ENCODE measurements at regions of chr15 and their contacts with region 1.

Region 1: DNA sequence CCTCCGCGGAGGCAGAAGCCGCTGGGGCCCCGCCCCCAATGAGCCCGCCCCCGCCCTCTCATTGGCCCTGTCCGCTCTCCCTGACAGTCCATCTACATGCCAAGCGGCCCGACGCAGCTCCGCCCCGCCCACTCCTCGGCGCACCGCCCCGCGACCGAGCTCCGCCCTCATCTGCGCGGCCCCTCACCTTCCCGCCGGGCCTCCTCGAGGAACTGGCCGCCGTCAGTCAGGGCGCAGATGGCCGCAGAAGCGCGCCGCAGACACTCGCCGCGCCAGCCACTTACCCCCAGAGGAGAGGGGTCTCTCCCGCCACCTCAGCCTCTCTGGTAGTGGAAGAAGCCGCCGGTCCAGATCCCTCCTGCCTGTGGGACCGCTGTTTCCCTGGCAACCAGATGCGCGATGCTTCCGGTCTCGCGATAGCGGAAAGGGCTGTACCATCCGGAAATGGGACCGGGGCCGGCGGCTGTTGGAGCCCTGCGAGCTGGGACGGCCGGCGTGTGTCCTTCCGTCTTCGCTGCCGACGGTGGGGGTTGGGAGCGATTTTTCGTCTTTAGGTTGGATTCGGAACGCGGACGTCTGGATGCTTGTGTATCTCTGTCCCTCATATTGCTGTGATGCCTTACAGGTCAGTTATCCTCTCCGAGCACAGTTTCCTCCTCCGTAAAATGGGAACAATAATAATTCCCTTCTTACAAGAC is at the start of gene FSIP1:
- DNase-seq: peak; percentile 91
- H3K4me3 Mint-ChIP-seq: peak within 1 kb of the TSS; percentile 83
- H3K27ac Mint-ChIP-seq: peak within 1 kb of the TSS; percentile 24
- H3K4me1 Mint-ChIP-seq: peaks cover 11% of the 10 kb centered on the region
- H3K27me3 Mint-ChIP-seq: no peaks in the 10 kb centered on the region
- CTCF ChIP-seq: no peak
- total RNA-seq, gene FSIP1: 0.27 and 0.28 TPM in 2 replicates

Region 2: GRCh38 chr15:39807791-39808190 is 25.2 kb after region 1 on chr15:
- CTCF ChIA-PET with region 1: no interaction called
- intact Hi-C with region 1: no loop called
- DNase-seq: no peak
- H3K4me3 Mint-ChIP-seq: no peak overlapping the region
- H3K27ac Mint-ChIP-seq: no peak overlapping the region
- H3K4me1 Mint-ChIP-seq: peaks cover 8% of the 10 kb centered on the region
- H3K27me3 Mint-ChIP-seq: no peaks in the 10 kb centered on the region
- CTCF ChIP-seq: no peak

Region 3: DNA sequence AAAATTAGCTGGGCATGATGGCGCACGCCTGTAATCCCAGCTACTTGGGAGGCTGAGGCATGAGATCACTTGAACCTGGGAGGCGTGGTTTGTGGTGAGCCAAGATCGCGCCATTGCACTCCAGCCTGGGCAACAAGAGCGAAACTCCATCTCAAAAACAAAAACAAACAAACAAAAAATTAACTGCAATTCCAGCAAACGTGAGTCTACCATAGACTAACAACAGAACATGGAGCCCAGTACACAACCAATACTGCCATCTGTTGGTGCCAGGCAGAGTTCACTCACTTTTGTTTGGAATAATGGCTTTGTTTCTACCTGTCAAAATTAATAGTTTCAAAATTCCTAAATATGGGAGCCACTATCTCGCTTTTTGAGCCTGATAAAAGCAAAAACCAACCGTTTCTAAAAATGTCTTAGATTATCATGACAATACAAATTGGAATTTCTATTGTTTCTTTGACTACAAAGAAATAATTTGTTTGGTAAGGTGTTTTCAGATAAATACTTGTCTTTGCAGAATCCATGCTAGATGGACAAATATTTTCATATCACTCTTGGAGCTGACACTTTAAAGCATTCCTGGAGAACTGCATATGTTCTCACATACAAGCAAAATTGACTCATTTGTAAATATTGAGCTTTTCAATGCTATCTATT is 92.4 kb after region 1 on chr15:
- CTCF ChIA-PET with region 1: no interaction called
- intact Hi-C with region 1: loop called (anchors 5 kb)
- DNase-seq: peak; percentile 10
- H3K4me3 Mint-ChIP-seq: no peak overlapping the region
- H3K27ac Mint-ChIP-seq: no peak overlapping the region
- H3K4me1 Mint-ChIP-seq: no peaks in the 10 kb centered on the region
- H3K27me3 Mint-ChIP-seq: no peaks in the 10 kb centered on the region
- CTCF ChIP-seq: no peak

Region 4: GRCh38 chr15:39934397-39935071 is 151.9 kb after region 1 on chr15:
- CTCF ChIA-PET with region 1: interaction called, 4 read pairs
- intact Hi-C with region 1: loop called (anchors 5 kb)
- DNase-seq: no peak
- H3K4me3 Mint-ChIP-seq: peak overlapping the region; percentile 90
- H3K27ac Mint-ChIP-seq: peak overlapping the region; percentile 71
- H3K4me1 Mint-ChIP-seq: peaks cover 16% of the 10 kb centered on the region
- H3K27me3 Mint-ChIP-seq: no peaks in the 10 kb centered on the region
- CTCF ChIP-seq: no peak

Region 5: DNA sequence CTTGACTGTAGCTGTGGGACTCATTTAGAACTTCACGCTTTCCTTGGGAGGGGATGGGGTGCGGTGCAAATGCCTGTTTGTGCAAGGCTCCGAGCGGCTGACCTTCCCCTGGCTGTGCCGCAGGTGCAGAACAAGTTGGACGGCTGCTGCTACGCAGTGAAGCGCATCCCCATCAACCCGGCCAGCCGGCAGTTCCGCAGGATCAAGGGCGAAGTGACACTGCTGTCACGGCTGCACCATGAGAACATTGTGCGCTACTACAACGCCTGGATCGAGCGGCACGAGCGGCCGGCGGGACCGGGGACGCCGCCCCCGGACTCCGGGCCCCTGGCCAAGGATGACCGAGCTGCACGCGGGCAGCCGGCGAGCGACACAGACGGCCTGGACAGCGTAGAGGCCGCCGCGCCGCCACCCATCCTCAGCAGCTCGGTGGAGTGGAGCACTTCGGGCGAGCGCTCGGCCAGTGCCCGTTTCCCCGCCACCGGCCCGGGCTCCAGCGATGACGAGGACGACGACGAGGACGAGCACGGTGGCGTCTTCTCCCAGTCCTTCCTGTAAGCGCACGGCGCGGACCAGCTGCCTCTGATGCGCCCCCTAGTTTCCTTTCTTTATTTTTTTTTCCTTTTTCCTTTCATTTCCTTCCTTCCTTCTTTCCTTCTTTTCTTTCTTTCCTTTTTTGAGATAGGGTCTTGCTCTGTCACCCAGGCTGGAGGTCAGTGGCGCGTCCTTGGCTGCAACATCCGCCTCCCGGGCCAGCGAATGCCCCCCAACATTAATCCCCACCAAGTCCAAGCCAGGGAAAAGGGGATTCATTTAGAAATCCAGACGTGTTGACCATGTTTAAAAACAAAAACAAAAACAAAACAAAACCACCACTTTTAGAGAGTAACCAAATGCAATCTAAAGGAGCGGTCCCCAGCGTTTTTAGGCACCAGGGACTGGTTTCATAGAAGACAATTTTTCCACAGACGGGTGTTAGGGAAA is 194.0 kb after region 1 on chr15:
- CTCF ChIA-PET with region 1: no interaction called
- intact Hi-C with region 1: loop called (anchors 10 kb)
- DNase-seq: peak; percentile 51
- H3K4me3 Mint-ChIP-seq: peak overlapping the region; percentile 67
- H3K27ac Mint-ChIP-seq: peak overlapping the region; percentile 55
- H3K4me1 Mint-ChIP-seq: peaks cover 8% of the 10 kb centered on the region
- H3K27me3 Mint-ChIP-seq: no peaks in the 10 kb centered on the region
- CTCF ChIP-seq: peak; percentile 38

Measured in Calu3 (cell line).